ENCODE measurements at regions of chr2 and their contacts with region 1.

Region 1: DNA sequence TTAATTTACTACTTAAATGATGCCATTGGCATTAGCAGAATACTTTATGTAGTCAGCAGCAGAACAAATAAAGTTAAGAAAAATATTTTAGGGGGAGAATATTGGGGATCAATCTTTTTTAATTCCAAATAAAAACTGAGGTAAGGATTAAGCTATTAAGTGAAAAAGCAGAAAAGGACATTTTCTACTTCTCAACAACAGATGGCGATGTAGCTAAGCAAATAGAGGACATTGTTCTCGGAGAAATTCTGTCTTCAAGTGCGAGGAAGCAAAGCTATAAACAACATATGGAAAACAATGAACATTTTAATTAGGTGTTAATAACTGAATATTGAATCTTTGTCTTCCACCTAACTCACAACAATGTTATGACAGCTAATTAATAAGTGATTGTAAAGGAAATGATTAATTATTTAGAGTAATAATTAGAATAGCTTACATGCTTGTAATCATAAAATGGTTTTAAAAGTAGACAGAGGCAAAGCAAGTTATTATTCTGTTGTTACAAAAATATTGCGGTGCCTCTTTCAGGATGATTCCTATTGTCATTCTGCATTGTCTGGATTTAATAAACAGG is 32.9 kb upstream of the CCDC93 start:
- DNase-seq: no peak
- H3K4me3 Mint-ChIP-seq: no peak overlapping the region
- H3K27ac Mint-ChIP-seq: no peak overlapping the region
- H3K4me1 Mint-ChIP-seq: peaks cover 10% of the 10 kb centered on the region
- H3K27me3 Mint-ChIP-seq: peaks cover 39% of the 10 kb centered on the region

Region 2: GRCh38 chr2:117717072-117717471 is 329.6 kb before region 1 on chr2:
- CTCF ChIA-PET with region 1: no interaction called
- POLR2A ChIA-PET with region 1: no interaction called
- intact Hi-C with region 1: no loop called
- DNase-seq: no peak
- H3K4me3 Mint-ChIP-seq: no peak overlapping the region
- H3K27ac Mint-ChIP-seq: no peak overlapping the region
- H3K4me1 Mint-ChIP-seq: no peaks in the 10 kb centered on the region
- H3K27me3 Mint-ChIP-seq: peaks cover 6% of the 10 kb centered on the region

Region 3: DNA sequence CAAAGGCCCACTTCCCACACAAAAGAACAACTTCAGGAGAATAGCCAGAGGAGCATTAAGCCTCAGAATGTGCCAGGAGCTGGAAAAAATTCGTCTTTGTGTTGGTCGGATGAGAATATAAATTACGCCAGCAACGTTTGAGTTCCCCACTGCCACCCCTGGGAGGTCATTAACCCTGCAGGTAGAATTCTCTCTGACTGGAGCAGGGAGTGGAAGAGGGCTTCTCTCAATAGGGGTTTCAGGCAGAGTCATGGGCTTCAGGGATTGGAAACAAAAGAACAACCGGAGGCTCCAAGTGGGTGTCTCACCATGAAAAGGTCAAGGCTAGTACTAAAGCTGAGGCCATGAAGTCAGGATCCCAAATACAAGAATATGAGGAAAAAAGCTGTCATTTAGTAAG is 301.2 kb before region 1 on chr2:
- CTCF ChIA-PET with region 1: no interaction called
- POLR2A ChIA-PET with region 1: no interaction called
- intact Hi-C with region 1: no loop called
- DNase-seq: no peak
- H3K4me3 Mint-ChIP-seq: no peak overlapping the region
- H3K27ac Mint-ChIP-seq: no peak overlapping the region
- H3K4me1 Mint-ChIP-seq: no peaks in the 10 kb centered on the region
- H3K27me3 Mint-ChIP-seq: no peaks in the 10 kb centered on the region

Region 4: DNA sequence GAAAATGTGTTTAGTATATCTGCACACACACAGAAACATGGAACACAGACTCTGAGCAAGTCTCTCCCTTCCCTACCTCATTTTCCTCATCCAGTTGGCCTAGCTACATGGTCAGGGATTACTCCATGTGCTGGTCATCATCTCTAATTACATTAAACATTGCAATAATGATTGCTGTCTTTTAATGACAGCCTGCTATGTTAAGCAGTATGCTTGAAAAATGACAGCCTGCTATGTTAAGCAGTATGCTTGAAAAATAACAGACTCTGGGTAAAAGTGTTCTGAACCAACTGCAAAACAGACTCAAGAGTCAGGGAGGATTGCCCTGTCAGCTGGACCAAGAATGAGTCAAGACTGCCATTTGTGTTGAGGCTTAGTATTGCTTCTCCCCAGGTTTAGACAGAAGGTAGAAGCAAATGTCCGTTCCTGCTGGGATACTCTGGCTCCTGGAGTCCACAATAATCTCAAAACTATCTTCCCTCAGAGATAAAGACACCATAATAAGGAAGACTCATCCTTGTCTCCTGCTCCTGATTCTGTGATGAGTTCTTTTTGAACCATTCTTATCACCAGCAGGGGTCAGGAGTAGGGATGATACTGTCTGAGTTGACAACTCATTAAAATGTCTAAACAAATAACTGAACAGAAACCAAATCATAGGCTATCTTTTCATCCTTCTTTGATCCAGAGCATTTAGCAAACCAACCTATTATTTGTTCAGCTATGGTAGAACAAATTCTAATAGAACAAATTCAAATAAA is 90.5 kb before region 1 on chr2:
- CTCF ChIA-PET with region 1: no interaction called
- POLR2A ChIA-PET with region 1: no interaction called
- intact Hi-C with region 1: no loop called
- DNase-seq: no peak
- H3K4me3 Mint-ChIP-seq: no peak overlapping the region
- H3K27ac Mint-ChIP-seq: no peak overlapping the region
- H3K4me1 Mint-ChIP-seq: no peaks in the 10 kb centered on the region
- H3K27me3 Mint-ChIP-seq: no peaks in the 10 kb centered on the region

Region 5: DNA sequence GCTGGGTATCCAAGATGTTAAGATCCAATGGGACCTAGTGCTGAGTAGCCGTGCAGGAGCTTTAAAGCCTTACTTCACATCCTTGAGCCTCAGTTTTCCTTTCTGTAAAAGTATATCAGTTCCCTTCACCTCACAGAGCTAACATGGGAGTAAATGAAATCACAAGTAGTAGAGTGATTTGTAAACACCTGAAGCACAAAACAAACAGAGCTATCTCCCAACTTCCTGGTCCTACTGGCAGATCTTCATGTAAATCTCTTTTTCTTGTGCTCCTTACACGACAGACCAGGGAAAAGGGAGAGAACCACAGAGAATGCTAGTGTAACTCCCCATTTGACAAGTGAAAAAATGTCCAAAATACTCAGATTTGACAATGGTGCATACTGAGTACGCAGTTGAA is 50.2 kb before region 1 on chr2:
- CTCF ChIA-PET with region 1: no interaction called
- POLR2A ChIA-PET with region 1: no interaction called
- intact Hi-C with region 1: no loop called
- DNase-seq: no peak
- H3K4me3 Mint-ChIP-seq: no peak overlapping the region
- H3K27ac Mint-ChIP-seq: no peak overlapping the region
- H3K4me1 Mint-ChIP-seq: no peaks in the 10 kb centered on the region
- H3K27me3 Mint-ChIP-seq: no peaks in the 10 kb centered on the region

Region 6: DNA sequence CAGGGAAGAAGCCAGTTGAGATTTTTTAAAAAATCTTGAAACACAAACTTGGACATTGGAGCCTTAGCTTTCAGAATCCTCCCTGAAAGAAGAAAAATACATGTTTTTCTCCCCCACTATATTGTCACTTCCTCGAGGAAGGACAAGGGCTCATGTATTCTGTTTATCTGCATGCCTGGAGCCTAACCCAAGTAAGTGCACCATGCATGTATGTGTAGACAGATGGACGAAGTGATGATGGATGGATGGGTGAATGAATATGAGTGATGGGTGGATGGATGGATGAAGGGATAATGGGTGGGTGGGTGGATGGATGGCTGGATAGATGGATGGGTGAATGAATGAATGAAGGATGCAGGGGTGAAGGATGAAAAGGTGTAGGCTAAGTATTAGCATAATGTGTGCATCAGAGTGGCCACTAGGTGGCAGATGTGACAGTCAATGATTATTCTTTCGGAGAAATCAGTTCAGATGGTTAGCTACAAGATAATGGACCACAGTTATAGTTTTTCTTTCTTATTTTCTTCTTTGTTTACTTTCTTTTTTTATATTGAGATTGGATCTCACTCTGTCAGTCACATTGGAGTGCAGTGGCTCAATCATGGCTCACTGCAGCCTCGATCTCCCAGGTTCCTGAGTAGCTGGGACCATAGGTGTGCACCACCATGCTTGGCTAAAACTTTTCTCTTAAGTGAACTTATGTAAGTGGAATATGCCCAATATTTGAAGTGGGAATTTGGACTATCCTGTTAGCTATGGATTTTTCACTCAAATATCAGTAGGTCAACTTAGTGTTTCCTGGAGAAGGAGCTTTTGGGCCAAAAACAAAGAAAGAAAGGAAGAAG is 14.3 kb before region 1 on chr2:
- CTCF ChIA-PET with region 1: interaction called, 46 read pairs
- POLR2A ChIA-PET with region 1: no interaction called
- intact Hi-C with region 1: no loop called
- DNase-seq: peak; percentile 52
- H3K4me3 Mint-ChIP-seq: no peak overlapping the region
- H3K27ac Mint-ChIP-seq: no peak overlapping the region
- H3K4me1 Mint-ChIP-seq: no peaks in the 10 kb centered on the region
- H3K27me3 Mint-ChIP-seq: peaks cover 33% of the 10 kb centered on the region

Region 7: DNA sequence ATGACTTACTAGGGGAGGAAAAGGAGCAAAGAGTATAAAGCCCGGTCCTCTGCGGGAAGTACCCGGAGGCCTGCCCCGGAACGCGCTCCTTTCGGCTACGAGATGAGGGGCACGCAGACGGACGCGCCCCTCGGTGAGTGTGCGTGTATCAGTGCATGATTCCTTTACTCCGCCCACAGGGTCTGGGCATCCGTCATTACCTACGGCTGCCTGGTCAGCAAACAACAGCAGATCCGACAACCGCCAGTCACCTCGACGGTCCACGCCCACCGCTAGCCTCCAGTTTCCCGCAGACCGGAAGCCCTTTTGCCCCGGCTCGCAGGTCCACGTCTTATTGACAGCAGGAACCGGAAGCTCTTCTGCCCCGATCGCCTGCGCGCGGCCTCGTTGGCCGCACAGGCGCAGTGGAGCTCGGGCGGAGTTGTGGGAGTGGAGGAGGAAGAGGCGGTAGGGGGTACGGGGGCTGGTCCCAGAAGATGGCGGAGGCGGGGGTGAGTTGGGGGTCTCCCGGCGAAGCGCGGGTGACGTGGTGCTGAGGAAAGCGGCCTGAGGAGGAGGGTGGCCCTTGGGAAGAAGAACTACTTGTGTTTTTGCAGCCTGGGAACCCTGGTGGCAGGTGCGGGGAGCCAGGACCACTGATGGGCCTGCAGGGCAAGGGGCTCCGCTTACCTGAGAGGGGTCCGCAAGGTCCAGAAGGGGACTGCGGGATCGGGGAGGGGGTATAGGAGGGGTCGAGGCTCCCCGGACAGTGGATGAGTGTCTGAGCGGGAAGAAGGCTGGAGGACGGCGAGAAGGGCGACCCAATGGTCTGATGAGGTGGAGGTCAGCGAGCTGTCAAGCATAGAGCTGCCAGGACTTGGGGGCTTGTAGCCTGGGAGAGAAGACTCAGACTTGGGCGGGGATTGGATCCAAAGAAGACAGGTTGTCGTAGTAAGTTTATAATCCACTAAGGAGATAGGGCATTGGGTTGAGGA is 41.6 kb after region 1 on chr2 and contains the start of gene INSIG2:
- CTCF ChIA-PET with region 1: interaction called, 21 read pairs
- POLR2A ChIA-PET with region 1: no interaction called
- intact Hi-C with region 1: loop called (anchors 2 kb)
- DNase-seq: peak; percentile 96
- H3K4me3 Mint-ChIP-seq: peak within 1 kb of the TSS; percentile 89
- H3K27ac Mint-ChIP-seq: peak within 1 kb of the TSS; percentile 85
- H3K4me1 Mint-ChIP-seq: peaks cover 21% of the 10 kb centered on the region
- H3K27me3 Mint-ChIP-seq: peaks cover 2% of the 10 kb centered on the region
- total RNA-seq, gene INSIG2: 35.0 to 40.2 TPM

Region 8: GRCh38 chr2:118186110-118186857 is 139.6 kb after region 1 on chr2:
- CTCF ChIA-PET with region 1: interaction called, 6 read pairs
- POLR2A ChIA-PET with region 1: no interaction called
- intact Hi-C with region 1: loop called (anchors 5 kb)
- DNase-seq: peak; percentile 92
- H3K4me3 Mint-ChIP-seq: peak overlapping the region; percentile 93
- H3K27ac Mint-ChIP-seq: peak overlapping the region; percentile 94
- H3K4me1 Mint-ChIP-seq: peaks cover 11% of the 10 kb centered on the region
- H3K27me3 Mint-ChIP-seq: no peaks in the 10 kb centered on the region

Region 9: DNA sequence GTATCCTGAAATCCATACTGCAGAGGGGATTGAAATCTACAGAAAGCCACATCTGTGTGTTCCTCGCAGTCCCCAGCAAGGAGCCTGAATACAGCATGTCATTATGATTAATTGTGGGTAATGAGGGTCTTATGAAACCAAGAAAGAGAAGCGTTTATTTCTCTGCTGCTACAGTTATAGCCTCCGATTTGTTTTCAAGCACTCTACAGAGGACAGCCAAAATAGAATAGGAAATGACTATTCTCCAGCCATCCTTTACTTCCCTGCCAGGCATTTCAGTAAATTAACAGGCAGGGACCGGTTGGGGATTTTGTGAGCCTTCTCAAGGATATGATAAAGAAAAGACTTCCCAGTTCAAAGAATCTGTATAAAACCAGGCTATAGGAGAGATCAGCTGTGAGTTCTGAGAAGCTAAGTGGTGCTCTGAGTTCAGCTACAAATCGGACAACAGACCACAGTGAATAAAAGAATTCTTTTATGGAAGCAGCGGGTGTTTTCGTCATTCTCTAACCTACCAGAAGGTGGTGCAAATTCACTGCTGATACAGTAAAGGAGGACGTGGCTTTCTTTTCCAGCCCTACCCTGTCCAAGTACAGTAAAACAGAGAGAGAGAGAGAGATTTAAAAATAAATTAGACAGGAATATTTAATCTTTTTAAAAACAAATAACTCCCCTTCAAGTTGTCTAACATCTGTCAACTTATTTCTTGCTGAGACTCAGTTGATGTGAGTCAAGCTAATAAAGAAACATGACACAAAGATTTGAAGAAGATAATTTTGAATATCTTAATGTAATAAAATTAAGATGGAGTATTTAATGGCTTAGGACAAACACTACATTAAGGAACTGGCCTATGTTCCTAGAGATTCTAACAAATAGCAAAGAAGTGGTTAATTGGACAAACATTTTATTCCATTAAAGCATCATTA is 175.2 kb after region 1 on chr2:
- CTCF ChIA-PET with region 1: interaction called, 16 read pairs
- POLR2A ChIA-PET with region 1: no interaction called
- intact Hi-C with region 1: no loop called
- DNase-seq: peak; percentile 26
- H3K4me3 Mint-ChIP-seq: no peak overlapping the region
- H3K27ac Mint-ChIP-seq: no peak overlapping the region
- H3K4me1 Mint-ChIP-seq: peaks cover 10% of the 10 kb centered on the region
- H3K27me3 Mint-ChIP-seq: peaks cover 51% of the 10 kb centered on the region

Region 10: GRCh38 chr2:118403658-118404451 is 357.1 kb after region 1 on chr2:
- CTCF ChIA-PET with region 1: no interaction called
- POLR2A ChIA-PET with region 1: no interaction called
- intact Hi-C with region 1: loop called (anchors 5 kb)
- DNase-seq: no peak
- H3K4me3 Mint-ChIP-seq: no peak overlapping the region
- H3K27ac Mint-ChIP-seq: no peak overlapping the region
- H3K4me1 Mint-ChIP-seq: peaks cover 5% of the 10 kb centered on the region
- H3K27me3 Mint-ChIP-seq: peaks cover 16% of the 10 kb centered on the region

Measured in activated CD4-positive, alpha-beta memory T cell treated with anti-CD3 and anti-CD28 coated beads for 36 hours (primary cell).